ENCODE measurements at regions of chr5 and their contacts with region 1.

Region 1: GRCh38 chr5:173283318-173284288 is 44.6 kb downstream of the STC2 start:
- DNase-seq: peak; percentile 89
- ATAC-seq: peak; percentile 98
- H3K4me3 ChIP-seq: no peak overlapping the region
- H3K27ac ChIP-seq: no peak overlapping the region
- H3K4me1 ChIP-seq: peaks cover 6% of the 10 kb centered on the region
- H3K27me3 ChIP-seq: peaks cover 55% of the 10 kb centered on the region
- CTCF ChIP-seq: peak; percentile 70

Region 2: DNA sequence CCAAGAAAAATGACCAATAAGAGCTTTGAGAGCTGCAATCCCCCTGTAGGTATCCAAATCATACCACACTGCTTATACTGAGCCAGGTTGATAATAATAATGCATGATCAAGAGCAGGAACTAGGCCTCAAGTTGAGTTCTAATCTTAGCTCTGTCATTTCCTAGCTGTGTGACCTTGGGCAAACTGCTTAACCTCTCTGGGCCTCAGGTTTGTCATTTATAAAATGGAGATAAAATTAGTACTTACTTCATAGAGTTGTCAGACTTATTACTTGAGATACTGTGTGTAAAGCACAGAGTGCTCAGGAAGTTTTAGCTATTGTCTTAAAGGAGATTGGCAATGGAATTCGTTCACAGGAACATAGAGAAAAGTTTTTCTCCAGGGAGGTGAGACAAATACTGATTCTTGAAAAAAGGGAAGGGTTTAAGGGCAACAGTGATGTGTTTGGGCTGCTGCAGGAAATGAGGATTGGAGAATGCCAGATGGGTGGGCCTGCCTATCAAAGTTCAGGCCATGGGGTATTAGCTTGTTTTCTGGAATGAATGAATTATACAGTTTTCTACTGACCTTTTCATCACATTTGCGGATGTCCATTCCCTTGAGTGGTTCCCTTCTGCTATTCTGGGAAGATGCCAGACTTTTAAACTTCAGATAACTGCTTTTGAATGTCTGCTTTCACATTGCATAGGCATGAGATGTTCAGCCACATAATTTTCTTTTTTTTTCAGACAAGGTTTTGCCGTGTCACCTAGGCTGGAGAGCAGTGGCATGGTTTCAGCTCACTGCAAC is 310.3 kb before region 1 on chr5:
- intact Hi-C with region 1: loop called (anchors 10 kb)
- DNase-seq: no peak
- ATAC-seq: no peak
- H3K4me3 ChIP-seq: no peak overlapping the region
- H3K27ac ChIP-seq: no peak overlapping the region
- H3K4me1 ChIP-seq: no peaks in the 10 kb centered on the region
- H3K27me3 ChIP-seq: no peaks in the 10 kb centered on the region
- CTCF ChIP-seq: no peak

Region 3: GRCh38 chr5:173035904-173036707 is 247.5 kb before region 1 on chr5:
- intact Hi-C with region 1: no loop called
- DNase-seq: peak; percentile 78
- ATAC-seq: peak; percentile 83
- H3K4me3 ChIP-seq: peak overlapping the region; percentile 9
- H3K27ac ChIP-seq: peak overlapping the region; percentile 86
- H3K4me1 ChIP-seq: peaks cover 28% of the 10 kb centered on the region
- H3K27me3 ChIP-seq: no peaks in the 10 kb centered on the region
- CTCF ChIP-seq: no peak